Naive thymus-derived CD4-positive, alpha-beta T cell (primary cell): ENCODE measurements at regions of chr9 and their contacts with region 1.

Region 1: GRCh38 chr9:87662808-87663528 is 63.0 kb upstream of the CTSL start:
- DNase-seq: peak in 4 of 9 donors; percentile 21 to 59 (median 28)
- ATAC-seq: peak; percentile 32
- H3K4me3 ChIP-seq: no peak overlapping the region
- H3K4me3 Mint-ChIP-seq: no peak overlapping the region
- H3K27ac ChIP-seq: no peak overlapping the region
- H3K27ac Mint-ChIP-seq: no peak overlapping the region
- H3K4me1 ChIP-seq: no peaks in the 10 kb centered on the region
- H3K4me1 Mint-ChIP-seq: peaks cover 0 to 4% (median 0%) of the 10 kb centered on the region in 7 donors
- H3K27me3 ChIP-seq: no peaks in the 10 kb centered on the region
- H3K27me3 Mint-ChIP-seq: peaks cover 0 to 15% (median 2%) of the 10 kb centered on the region in 5 donors

Region 2: DNA sequence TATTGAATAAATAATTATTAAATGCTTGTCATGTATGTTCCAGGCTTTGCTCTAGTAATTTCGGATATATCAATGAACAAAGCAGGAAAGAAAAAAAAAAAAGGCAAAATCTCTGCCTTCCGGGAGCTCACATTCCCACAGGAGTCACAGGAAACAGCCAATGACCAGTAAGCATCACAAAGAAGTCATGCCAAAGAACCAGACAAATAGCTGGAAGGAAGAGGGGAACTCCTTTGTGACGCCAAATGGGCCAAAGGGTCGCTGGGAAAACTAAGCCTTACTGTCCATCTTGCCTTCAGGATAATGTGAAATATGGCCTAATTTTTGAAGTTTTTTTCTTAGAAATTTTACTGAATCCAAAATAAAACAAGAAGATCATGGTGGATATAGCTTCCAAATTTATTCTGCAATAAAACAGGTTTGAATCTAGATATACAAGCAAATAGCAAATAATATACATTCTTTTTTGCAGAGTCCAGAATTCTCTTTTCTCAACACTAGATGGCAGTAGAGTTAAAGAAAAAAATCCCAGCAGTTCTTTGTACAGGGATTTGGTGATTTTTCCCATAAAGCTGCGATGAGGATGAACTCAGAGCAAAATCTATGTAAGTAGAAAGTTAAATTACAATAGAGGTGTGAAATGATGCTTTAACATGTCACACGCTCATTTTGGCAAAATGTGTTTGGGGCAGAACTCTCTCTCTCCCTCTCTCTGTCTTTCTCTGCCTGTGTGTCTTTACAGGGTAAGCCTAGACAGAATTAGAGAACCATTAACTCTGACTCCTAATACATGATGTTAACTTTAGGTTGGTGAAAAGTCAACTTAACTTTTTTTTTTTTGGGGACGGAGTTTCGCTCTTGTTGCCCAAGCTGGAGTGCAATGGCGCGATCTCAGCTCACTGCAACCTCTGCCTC is 1248.7 kb before region 1 on chr9:
- CTCF ChIA-PET with region 1: no interaction called
- POLR2A ChIA-PET with region 1: no interaction called
- intact Hi-C with region 1: loop called in 1 of 2 experiments (anchors 10 kb)
- DNase-seq: peak in 5 of 9 donors; percentile 8 to 39 (median 17)
- ATAC-seq: no peak
- H3K4me3 ChIP-seq: no peak overlapping the region
- H3K4me3 Mint-ChIP-seq: no peak overlapping the region
- H3K27ac ChIP-seq: no peak overlapping the region
- H3K27ac Mint-ChIP-seq: no peak overlapping the region
- H3K4me1 ChIP-seq: no peaks in the 10 kb centered on the region
- H3K4me1 Mint-ChIP-seq: no peaks in the 10 kb centered on the region
- H3K27me3 ChIP-seq: no peaks in the 10 kb centered on the region
- H3K27me3 Mint-ChIP-seq: peaks cover 0 to 12% (median 9%) of the 10 kb centered on the region in 5 donors

Region 3: DNA sequence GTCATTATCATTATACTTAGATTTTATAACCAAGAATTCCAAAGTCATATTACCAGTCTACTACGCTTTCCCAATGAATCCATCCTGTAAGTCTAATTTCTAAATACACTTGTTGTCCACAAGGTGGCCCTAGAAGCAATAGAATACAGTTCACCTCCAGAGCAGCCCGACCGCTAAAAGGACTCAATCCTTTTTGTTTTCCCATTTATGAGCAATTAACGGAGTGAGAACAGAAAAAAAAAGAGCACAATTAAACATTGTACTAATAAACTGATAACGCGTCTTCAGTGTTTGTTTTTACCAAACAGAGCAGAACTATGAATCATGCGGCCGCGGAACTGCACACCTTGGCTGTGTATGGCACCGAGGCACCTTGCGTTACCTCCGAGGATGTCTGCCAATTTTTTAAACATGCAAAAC is 326.0 kb before region 1 on chr9:
- CTCF ChIA-PET with region 1: no interaction called
- POLR2A ChIA-PET with region 1: no interaction called
- intact Hi-C with region 1: loop called in 1 of 2 experiments (anchors 2 kb)
- DNase-seq: peak in 5 of 9 donors; percentile 17 to 40 (median 29)
- ATAC-seq: peak; percentile 64
- H3K4me3 ChIP-seq: peak overlapping the region; percentile 8
- H3K4me3 Mint-ChIP-seq: peak overlapping the region; percentile 37 to 87 (median 77)
- H3K27ac ChIP-seq: no peak overlapping the region
- H3K27ac Mint-ChIP-seq: no peak overlapping the region
- H3K4me1 ChIP-seq: no peaks in the 10 kb centered on the region
- H3K4me1 Mint-ChIP-seq: peaks cover 0 to 16% (median 11%) of the 10 kb centered on the region in 7 donors
- H3K27me3 ChIP-seq: peaks cover 0 to 6% of the 10 kb centered on the region in 2 donors
- H3K27me3 Mint-ChIP-seq: peaks cover 21 to 59% (median 45%) of the 10 kb centered on the region in 5 donors